A673 (cell line): ENCODE measurements at regions of chr20 and their contacts with region 1.

Region 1: GRCh38 chr20:31605031-31605901 is at the start of gene ID1:
- DNase-seq: peak; percentile 98
- H3K4me3 ChIP-seq: peak within 1 kb of the TSS; percentile 73
- H3K27ac ChIP-seq: peak within 1 kb of the TSS; percentile 96
- H3K4me1 ChIP-seq: peaks cover 27% of the 10 kb centered on the region
- H3K27me3 ChIP-seq: no peaks in the 10 kb centered on the region
- CTCF ChIP-seq: no peak
- total RNA-seq, gene ID1: 24.6 and 39.3 TPM in 2 replicates

Region 2: GRCh38 chr20:31572701-31573554 is 32.3 kb before region 1 on chr20:
- CTCF ChIA-PET with region 1: interaction called, 6 read pairs
- POLR2A ChIA-PET with region 1: interaction called, 23 read pairs
- intact Hi-C with region 1: no loop called
- DNase-seq: peak; percentile 97
- H3K4me3 ChIP-seq: peak overlapping the region; percentile 51
- H3K27ac ChIP-seq: peak overlapping the region; percentile 94
- H3K4me1 ChIP-seq: peaks cover 20% of the 10 kb centered on the region
- H3K27me3 ChIP-seq: no peaks in the 10 kb centered on the region
- CTCF ChIP-seq: no peak

Region 3: GRCh38 chr20:31652917-31653396 is 47.7 kb after region 1 on chr20:
- CTCF ChIA-PET with region 1: no interaction called
- POLR2A ChIA-PET with region 1: interaction called, 12 read pairs
- intact Hi-C with region 1: no loop called
- DNase-seq: peak; percentile 64
- H3K4me3 ChIP-seq: no peak overlapping the region
- H3K27ac ChIP-seq: no peak overlapping the region
- H3K4me1 ChIP-seq: peaks cover 17% of the 10 kb centered on the region
- H3K27me3 ChIP-seq: no peaks in the 10 kb centered on the region
- CTCF ChIP-seq: no peak

Region 4: GRCh38 chr20:31712564-31713311 is 107.5 kb after region 1 on chr20:
- CTCF ChIA-PET with region 1: no interaction called
- POLR2A ChIA-PET with region 1: no interaction called
- intact Hi-C with region 1: no loop called
- DNase-seq: peak; percentile 74
- H3K4me3 ChIP-seq: peak overlapping the region; percentile 28
- H3K27ac ChIP-seq: peak overlapping the region; percentile 95
- H3K4me1 ChIP-seq: peaks cover 64% of the 10 kb centered on the region
- H3K27me3 ChIP-seq: no peaks in the 10 kb centered on the region
- CTCF ChIP-seq: no peak

Region 5: DNA sequence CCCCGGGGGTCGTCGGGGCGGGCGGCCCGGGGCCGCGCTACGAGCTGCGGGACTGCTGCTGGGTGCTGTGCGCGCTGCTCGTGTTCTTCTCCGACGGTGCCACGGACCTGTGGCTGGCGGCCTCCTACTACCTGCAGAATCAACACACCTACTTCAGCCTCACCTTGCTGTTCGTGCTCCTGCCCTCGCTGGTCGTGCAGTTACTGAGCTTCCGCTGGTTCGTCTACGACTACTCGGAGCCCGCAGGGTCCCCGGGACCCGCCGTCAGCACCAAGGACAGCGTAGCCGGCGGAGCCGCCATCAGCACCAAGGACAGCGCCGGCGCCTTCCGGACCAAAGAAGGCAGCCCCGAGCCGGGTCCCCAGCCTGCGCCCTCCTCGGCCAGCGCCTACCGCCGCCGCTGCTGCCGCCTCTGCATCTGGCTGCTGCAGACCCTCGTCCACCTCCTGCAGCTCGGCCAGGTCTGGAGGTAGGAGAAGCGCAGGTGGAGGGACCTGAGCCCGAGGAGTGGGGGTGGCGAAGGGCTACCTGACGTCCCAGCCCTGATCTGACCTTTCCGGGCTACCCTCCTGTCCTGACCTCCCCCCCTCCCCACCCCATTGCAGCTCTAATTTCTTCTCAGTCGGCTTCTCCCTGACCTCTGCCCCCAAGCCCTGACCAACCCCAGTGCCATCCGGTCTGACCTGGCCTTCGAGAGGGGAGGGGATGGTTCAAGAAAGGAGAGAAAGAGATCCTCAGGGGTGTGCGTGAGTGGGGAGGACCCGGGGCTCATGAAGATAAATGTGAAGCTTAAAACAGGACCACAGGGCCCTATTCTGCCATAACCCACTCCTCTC is 363.2 kb after region 1 on chr20:
- CTCF ChIA-PET with region 1: no interaction called
- POLR2A ChIA-PET with region 1: no interaction called
- intact Hi-C with region 1: no loop called
- DNase-seq: peak; percentile 79
- H3K4me3 ChIP-seq: no peak overlapping the region
- H3K27ac ChIP-seq: no peak overlapping the region
- H3K4me1 ChIP-seq: no peaks in the 10 kb centered on the region
- H3K27me3 ChIP-seq: peaks cover 69% of the 10 kb centered on the region
- CTCF ChIP-seq: no peak

Region 6: GRCh38 chr20:32037929-32038328 is 432.7 kb after region 1 on chr20:
- CTCF ChIA-PET with region 1: no interaction called
- POLR2A ChIA-PET with region 1: interaction called, 15 read pairs
- intact Hi-C with region 1: no loop called
- DNase-seq: no peak
- H3K4me3 ChIP-seq: no peak overlapping the region
- H3K27ac ChIP-seq: no peak overlapping the region
- H3K4me1 ChIP-seq: peaks cover 3% of the 10 kb centered on the region
- H3K27me3 ChIP-seq: no peaks in the 10 kb centered on the region
- CTCF ChIP-seq: no peak